Pancreas (tissue), 10 donors: ENCODE measurements at regions of chr13 and their contacts with region 1.

Region 1: GRCh38 chr13:109786457-109787134 is at the start of gene IRS2:
- DNase-seq: peak; percentile 87 to 95 (median 92)
- ATAC-seq: peak; percentile 77 to 82 (median 79)
- H3K4me3 ChIP-seq: peak within 1 kb of the TSS; percentile 55 to 84 (median 76)
- H3K27ac ChIP-seq: peak within 1 kb of the TSS; percentile 73 to 90 (median 86)
- H3K4me1 ChIP-seq: peaks cover 4 to 14% (median 5%) of the 10 kb centered on the region in 3 donors
- H3K27me3 ChIP-seq: no peaks in the 10 kb centered on the region
- CTCF ChIP-seq: no peak
- total RNA-seq, gene IRS2: 4.3 to 9.8 (median 5.4) TPM

Region 2: GRCh38 chr13:108961542-108962125 is 825.0 kb before region 1 on chr13:
- intact Hi-C with region 1: loop called in 1 of 3 experiments (anchors 10 kb)
- DNase-seq: no peak
- ATAC-seq: peak; percentile 76 to 91 (median 82)
- H3K4me3 ChIP-seq: no peak overlapping the region
- H3K27ac ChIP-seq: no peak overlapping the region
- H3K4me1 ChIP-seq: no peaks in the 10 kb centered on the region
- H3K27me3 ChIP-seq: no peaks in the 10 kb centered on the region
- CTCF ChIP-seq: peak; percentile 66 to 78 (median 76)

Region 3: GRCh38 chr13:109113427-109113826 is 673.2 kb before region 1 on chr13:
- intact Hi-C with region 1: no loop called
- DNase-seq: no peak
- ATAC-seq: no peak
- H3K4me3 ChIP-seq: no peak overlapping the region
- H3K27ac ChIP-seq: no peak overlapping the region
- H3K4me1 ChIP-seq: no peaks in the 10 kb centered on the region
- H3K27me3 ChIP-seq: no peaks in the 10 kb centered on the region
- CTCF ChIP-seq: no peak

Region 4: GRCh38 chr13:109145631-109146030 is 641.0 kb before region 1 on chr13:
- intact Hi-C with region 1: loop called in 2 of 3 experiments (anchors 10 kb)
- DNase-seq: peak in 2 of 6 donors; percentile 12 to 50
- ATAC-seq: peak in 3 of 4 donors; percentile 89 to 93 (median 92)
- H3K4me3 ChIP-seq: no peak overlapping the region
- H3K27ac ChIP-seq: no peak overlapping the region
- H3K4me1 ChIP-seq: no peaks in the 10 kb centered on the region
- H3K27me3 ChIP-seq: peaks cover 0 to 8% (median 0%) of the 10 kb centered on the region in 4 donors
- CTCF ChIP-seq: peak in 3 of 4 donors; percentile 58 to 62 (median 60)

Region 5: DNA sequence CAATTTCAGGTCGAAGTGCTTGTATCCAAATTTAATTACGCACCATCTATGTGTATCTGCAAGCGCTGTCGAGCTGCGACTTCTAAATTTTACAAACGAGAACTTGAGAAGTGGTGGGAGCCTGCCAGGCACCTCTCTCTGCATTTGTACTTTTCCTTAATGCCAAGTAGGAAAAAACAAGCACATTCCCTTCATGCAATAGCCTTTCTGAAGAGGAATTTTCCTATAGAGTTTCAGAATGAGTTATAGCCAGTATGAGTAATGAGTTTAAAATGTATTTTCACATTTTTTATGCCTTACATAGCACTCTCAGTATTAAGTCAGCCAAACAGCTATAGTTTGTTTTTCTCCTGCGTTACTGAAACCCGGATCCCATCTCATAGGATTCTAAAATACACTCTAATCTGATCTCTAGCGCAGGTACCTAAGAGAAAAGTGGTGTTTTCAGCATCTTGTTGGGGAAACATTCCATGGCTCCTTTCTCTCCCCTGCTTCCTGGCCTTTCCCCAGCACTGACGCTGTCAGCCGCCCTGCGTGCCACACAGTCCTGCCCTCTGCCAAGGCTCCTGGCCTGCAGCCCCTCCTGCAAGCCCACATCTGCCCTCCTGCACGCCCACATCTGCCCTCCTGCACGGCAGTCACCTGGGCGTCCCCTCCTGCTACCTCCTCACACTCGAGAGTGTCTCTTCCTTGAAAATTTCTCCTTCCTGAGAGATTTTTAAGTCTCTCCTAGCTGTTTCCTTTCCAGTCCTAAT is 630.2 kb before region 1 on chr13:
- intact Hi-C with region 1: loop called in 1 of 3 experiments (anchors 10 kb)
- DNase-seq: no peak
- ATAC-seq: peak in 2 of 4 donors; percentile 18 to 60
- H3K4me3 ChIP-seq: no peak overlapping the region
- H3K27ac ChIP-seq: no peak overlapping the region
- H3K4me1 ChIP-seq: no peaks in the 10 kb centered on the region
- H3K27me3 ChIP-seq: no peaks in the 10 kb centered on the region
- CTCF ChIP-seq: no peak

Region 6: DNA sequence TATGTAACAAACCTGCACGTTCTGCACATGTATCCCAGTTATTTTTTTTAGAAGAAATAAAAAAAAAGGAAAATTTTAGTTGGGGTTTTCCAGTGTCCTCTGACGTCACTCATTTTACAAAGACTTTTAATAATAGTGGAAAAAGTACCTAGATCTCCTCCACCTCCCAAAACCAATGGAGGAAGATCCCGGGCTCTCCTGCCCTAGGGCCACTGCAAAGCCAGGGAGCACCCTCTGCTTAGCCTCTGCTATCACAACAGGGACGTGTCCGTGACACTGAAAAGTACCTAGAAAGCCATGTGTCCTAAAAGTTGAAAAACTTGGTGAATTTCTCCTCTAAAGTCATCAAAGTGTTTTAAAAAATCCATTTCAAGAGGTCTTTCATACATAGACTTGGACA is 46.5 kb after region 1 on chr13:
- intact Hi-C with region 1: no loop called
- DNase-seq: no peak
- ATAC-seq: no peak
- H3K4me3 ChIP-seq: no peak overlapping the region
- H3K27ac ChIP-seq: no peak overlapping the region
- H3K4me1 ChIP-seq: no peaks in the 10 kb centered on the region
- H3K27me3 ChIP-seq: no peaks in the 10 kb centered on the region
- CTCF ChIP-seq: no peak